Transverse colon (tissue), 4 donors: ENCODE measurements at regions of chr6 and their contacts with region 1.

Region 1: DNA sequence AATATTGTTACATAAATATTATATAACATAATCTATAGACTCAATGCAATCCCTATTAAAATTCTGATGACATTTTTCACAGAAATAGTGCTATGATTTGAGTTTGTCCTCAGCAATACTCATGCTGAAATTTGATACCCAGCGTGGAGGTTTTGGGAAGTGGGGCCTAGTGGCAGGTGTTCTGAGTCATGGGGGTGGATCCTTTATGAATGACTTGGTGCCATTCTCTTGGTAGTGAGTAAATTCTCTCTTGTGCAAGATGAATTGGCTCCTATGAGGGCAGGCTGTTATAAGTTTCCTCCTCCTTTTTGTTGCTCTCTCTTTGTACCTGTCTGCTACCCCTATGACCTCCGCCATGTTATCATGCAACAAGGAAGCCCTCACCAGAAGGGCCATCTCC is 65.8 kb downstream of the SHPRH start:
- DNase-seq: no peak
- H3K4me3 ChIP-seq: no peak overlapping the region
- H3K27ac ChIP-seq: no peak overlapping the region
- H3K4me1 ChIP-seq: peaks cover 0 to 1% (median 0%) of the 10 kb centered on the region in 4 donors
- H3K27me3 ChIP-seq: no peaks in the 10 kb centered on the region
- CTCF ChIP-seq: no peak
- EP300 ChIP-seq: no peak
- POLR2A ChIP-seq: no peak

Region 2: DNA sequence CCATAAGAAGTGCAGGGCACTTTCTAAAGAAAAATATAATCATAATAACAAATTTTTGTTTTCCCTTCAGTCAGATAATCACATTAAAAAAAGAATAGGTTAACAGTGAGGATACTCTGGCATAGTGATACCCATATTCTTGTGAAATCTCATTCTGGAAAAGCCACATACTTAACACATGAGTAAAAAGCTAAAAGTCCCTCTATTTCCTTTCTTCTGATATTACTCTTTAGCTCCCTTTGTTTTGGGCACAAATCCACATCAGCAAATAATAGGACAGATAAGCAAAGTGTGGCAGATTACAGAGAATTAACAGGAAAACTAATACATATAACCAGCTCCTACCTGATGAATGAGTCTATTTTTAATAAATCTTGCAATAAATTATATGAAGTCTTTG is 50.0 kb after region 1 on chr6:
- in situ Hi-C with region 1: no loop called
- intact Hi-C with region 1: loop called (anchors 2 kb)
- DNase-seq: no peak
- H3K4me3 ChIP-seq: no peak overlapping the region
- H3K27ac ChIP-seq: no peak overlapping the region
- H3K4me1 ChIP-seq: no peaks in the 10 kb centered on the region
- H3K27me3 ChIP-seq: no peaks in the 10 kb centered on the region
- CTCF ChIP-seq: no peak
- EP300 ChIP-seq: no peak
- POLR2A ChIP-seq: no peak

Region 3: DNA sequence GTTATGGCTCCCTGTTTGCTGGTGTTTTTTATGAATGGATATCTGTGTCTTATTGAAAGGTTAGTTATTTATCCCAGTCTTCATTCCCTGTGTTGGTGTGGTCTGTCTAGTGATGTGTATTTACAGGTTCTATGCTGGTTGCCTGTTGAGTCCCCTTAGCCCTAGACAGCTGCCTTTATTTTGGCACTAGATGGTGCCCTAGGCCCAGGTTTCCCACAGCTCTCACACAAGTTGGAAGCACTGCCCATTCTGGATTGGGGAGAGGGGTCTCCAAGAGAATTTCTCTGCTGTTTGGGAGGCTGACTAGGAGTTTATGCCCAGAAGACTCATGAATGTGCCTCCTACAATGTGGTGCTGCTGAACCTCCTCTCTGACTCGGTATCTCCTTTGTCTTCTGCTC is 142.9 kb after region 1 on chr6:
- in situ Hi-C with region 1: no loop called
- intact Hi-C with region 1: no loop called
- DNase-seq: no peak
- H3K4me3 ChIP-seq: no peak overlapping the region
- H3K27ac ChIP-seq: no peak overlapping the region
- H3K4me1 ChIP-seq: no peaks in the 10 kb centered on the region
- H3K27me3 ChIP-seq: no peaks in the 10 kb centered on the region
- CTCF ChIP-seq: no peak
- EP300 ChIP-seq: no peak
- POLR2A ChIP-seq: no peak